Heart right ventricle (tissue), 16 donors: ENCODE measurements at regions of chr3 and their contacts with region 1.

Region 1: DNA sequence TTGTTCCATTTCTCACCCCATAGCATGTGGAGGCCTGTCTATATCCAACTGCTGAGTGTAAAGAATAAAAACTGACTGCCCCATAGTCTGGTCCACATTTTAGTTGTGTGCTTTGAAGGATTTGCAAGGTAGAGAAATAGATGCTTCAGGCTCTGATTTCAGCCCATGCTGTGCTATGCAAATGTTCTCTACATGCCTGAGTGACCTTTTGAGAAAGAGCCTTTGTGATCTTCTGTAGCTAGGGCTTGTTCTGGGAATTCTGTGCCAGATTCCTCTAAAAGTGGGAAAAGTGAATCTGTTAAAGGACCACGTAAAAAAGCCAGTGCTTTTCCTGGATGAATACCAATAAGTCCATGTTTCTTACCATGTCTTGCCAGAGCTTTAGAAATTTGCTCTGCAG is 5.2 kb downstream of the KCTD6 start:
- DNase-seq: no peak
- ATAC-seq: peak in 1 of 8 donors; percentile 29
- H3K4me3 ChIP-seq: no peak overlapping the region
- H3K27ac ChIP-seq: peak overlapping the region in 3 of 10 donors; percentile 13 to 51 (median 21)
- H3K4me1 ChIP-seq: peaks cover 5 to 59% (median 53%) of the 10 kb centered on the region in 9 donors
- H3K27me3 ChIP-seq: no peaks in the 10 kb centered on the region
- CTCF ChIP-seq: no peak

Region 2: GRCh38 chr3:58433400-58434169 is 63.5 kb before region 1 on chr3 and contains the start of gene PDHB:
- intact Hi-C with region 1: loop called in 4 of 10 experiments (anchors 5 kb)
- DNase-seq: peak; percentile 92 to 95
- ATAC-seq: peak; percentile 97 to 99 (median 98)
- H3K4me3 ChIP-seq: peak within 1 kb of the TSS; percentile 42 to 93 (median 72)
- H3K27ac ChIP-seq: peak within 1 kb of the TSS; percentile 75 to 98 (median 96)
- H3K4me1 ChIP-seq: peaks cover 0 to 34% (median 30%) of the 10 kb centered on the region in 9 donors
- H3K27me3 ChIP-seq: no peaks in the 10 kb centered on the region
- CTCF ChIP-seq: peak in 2 of 9 donors; percentile 9 to 21
- total RNA-seq, gene PDHB: 170 to 255 (median 217) TPM

Region 3: GRCh38 chr3:58998476-58999117 is 501.5 kb after region 1 on chr3:
- intact Hi-C with region 1: no loop called
- DNase-seq: no peak
- ATAC-seq: peak in 1 of 8 donors; percentile 67
- H3K4me3 ChIP-seq: no peak overlapping the region
- H3K27ac ChIP-seq: no peak overlapping the region
- H3K4me1 ChIP-seq: no peaks in the 10 kb centered on the region
- H3K27me3 ChIP-seq: no peaks in the 10 kb centered on the region
- CTCF ChIP-seq: no peak